A549 (cell line): ENCODE measurements at regions of chr1 and their contacts with region 1.

Region 1: GRCh38 chr1:20493839-20494608 is 8.0 kb upstream of the CAMK2N1 start:
- DNase-seq: peak; percentile 76 to 85
- ATAC-seq: peak; percentile 73 to 90
- H3K4me3 ChIP-seq: no peak overlapping the region
- H3K27ac ChIP-seq: peak overlapping the region; percentile 67 to 73
- H3K4me1 ChIP-seq: peaks cover 16% of the 10 kb centered on the region
- CTCF ChIP-seq: peak; percentile 86
- EP300 ChIP-seq: no peak
- POLR2A ChIP-seq: no peak
- RAD21 ChIP-seq: peak; percentile 97 to 99

Region 2: DNA sequence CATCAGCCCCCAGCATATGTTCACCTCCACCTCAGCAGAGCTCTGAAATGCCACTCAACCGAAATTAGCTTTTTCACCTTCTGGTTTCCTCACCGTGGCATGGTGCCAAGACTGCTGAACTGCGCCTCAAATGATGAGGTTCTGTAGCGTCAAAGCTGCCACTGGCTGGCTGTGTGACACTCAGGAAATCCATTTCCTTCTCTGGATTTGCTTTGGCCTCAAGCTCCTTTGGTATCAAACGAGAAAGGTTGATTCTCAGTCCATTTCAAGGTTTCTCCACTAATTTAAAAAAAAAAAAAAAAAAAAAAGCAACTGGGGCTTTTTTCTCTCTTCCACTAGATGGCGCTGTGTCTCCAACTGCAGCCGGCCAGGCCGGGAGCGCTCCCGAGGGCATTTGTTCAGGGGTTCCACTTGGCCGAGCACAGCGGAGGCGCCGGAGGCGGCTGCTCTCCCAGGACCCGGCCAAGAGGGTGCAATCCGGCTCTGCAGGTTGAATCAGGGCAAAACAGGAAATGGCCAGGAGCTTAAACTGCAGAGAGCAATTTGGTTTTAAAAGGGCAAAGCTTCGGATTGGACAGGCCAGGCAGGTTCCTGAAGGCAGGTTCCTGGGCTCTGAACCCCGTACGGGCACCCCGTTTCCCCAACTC is 281.2 kb before region 1 on chr1:
- CTCF ChIA-PET with region 1: interaction called, 162 read pairs
- POLR2A ChIA-PET with region 1: no interaction called
- DNase-seq: peak; percentile 48 to 50
- ATAC-seq: peak; percentile 76 to 87
- H3K4me3 ChIP-seq: no peak overlapping the region
- H3K27ac ChIP-seq: peak overlapping the region; percentile 87 to 91
- H3K4me1 ChIP-seq: peaks cover 34% of the 10 kb centered on the region
- CTCF ChIP-seq: peak; percentile 86
- EP300 ChIP-seq: no peak
- POLR2A ChIP-seq: no peak
- RAD21 ChIP-seq: peak; percentile 69 to 82

Region 3: DNA sequence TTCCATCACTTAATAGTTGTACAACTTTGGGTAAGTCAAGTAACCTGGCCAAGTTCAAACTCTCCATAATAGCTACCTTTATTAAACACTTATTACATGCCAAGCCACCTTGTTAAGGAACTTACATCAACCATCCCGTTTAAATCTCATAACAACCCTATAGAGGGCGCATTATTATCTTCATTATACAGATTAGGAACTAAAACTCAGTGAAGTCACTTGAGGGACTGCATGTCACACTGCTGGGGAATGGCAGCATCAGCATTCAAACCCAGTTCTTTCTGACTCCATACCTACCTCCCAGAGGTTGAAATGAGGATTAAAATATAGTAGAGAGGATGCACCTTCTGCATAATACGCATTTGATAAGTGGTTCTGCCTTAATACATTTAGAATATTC is 260.6 kb before region 1 on chr1:
- CTCF ChIA-PET with region 1: interaction called, 15 read pairs
- POLR2A ChIA-PET with region 1: no interaction called
- DNase-seq: peak in 1 of 2 experiments; percentile 31
- ATAC-seq: peak; percentile 54 to 78; a peak in 4 of 6 replicates
- H3K4me3 ChIP-seq: no peak overlapping the region
- H3K27ac ChIP-seq: no peak overlapping the region
- H3K4me1 ChIP-seq: no peaks in the 10 kb centered on the region
- CTCF ChIP-seq: peak; percentile 49
- EP300 ChIP-seq: no peak
- POLR2A ChIP-seq: no peak
- RAD21 ChIP-seq: peak; percentile 23 to 29; a peak in 4 of 5 replicates

Region 4: DNA sequence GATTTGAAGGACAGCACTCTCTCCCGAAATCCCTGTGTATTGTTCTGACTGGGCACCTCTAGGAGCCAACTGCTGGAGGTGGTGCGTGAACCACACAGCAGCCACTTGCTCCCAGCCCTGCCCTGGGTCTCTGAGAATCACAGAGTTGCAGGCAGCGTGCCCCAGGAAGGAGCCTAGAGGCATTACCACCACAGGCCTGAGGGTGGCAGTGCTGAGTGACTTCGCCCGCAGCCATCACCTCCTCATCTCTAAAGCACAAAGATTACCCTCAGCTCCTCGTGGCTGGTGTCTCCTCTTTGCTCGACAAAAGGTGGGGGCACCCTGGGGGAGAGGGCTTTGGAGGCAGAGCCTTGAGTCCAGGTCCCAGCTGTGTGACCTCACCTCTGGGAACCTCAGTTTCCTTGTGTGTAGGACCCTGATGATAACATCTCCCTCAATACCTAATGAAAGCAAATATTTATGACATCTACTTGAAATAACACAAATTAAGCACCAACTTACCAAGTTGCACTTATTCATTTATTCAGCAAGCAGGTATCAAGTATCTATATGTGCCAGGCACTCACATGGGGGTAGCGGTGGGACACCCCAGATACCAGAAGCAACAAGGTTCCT is 117.0 kb before region 1 on chr1:
- CTCF ChIA-PET with region 1: interaction called, 26 read pairs
- POLR2A ChIA-PET with region 1: no interaction called
- DNase-seq: peak; percentile 34 to 59
- ATAC-seq: peak; percentile 65 to 92; a peak in 5 of 6 replicates
- H3K4me3 ChIP-seq: no peak overlapping the region
- H3K27ac ChIP-seq: peak overlapping the region in 1 of 2 experiments; percentile 43; a peak in 2 of 6 replicates
- H3K4me1 ChIP-seq: peaks cover 33% of the 10 kb centered on the region
- CTCF ChIP-seq: peak; percentile 48
- EP300 ChIP-seq: no peak
- POLR2A ChIP-seq: no peak
- RAD21 ChIP-seq: peak; percentile 42 to 61; a peak in 4 of 5 replicates

Region 5: DNA sequence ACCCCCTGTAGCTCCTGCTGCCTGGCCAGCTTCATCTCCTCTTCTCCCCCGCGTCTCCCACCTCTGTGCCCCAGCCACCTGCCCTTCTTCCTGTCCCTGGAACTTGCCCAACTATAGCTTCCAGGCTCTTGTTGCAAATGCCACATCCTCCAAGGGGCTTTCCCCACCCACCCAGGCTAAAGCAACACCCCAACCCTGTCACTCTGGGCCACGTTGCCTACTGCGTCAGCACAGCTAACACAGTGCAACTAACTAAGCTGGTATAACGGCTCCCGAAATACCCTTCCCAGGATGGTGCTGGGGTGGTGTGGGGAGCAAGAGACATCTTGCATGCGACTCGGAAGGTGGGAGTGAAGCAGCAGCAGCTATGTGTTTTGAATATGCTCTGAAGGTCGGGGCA is 27.8 kb before region 1 on chr1:
- CTCF ChIA-PET with region 1: interaction called, 14 read pairs
- POLR2A ChIA-PET with region 1: no interaction called
- DNase-seq: no peak
- ATAC-seq: no peak; a peak in 1 of 6 replicates
- H3K4me3 ChIP-seq: no peak overlapping the region
- H3K27ac ChIP-seq: no peak overlapping the region
- H3K4me1 ChIP-seq: peaks cover 6% of the 10 kb centered on the region
- CTCF ChIP-seq: no peak
- EP300 ChIP-seq: no peak
- POLR2A ChIP-seq: no peak
- RAD21 ChIP-seq: no peak

Region 6: DNA sequence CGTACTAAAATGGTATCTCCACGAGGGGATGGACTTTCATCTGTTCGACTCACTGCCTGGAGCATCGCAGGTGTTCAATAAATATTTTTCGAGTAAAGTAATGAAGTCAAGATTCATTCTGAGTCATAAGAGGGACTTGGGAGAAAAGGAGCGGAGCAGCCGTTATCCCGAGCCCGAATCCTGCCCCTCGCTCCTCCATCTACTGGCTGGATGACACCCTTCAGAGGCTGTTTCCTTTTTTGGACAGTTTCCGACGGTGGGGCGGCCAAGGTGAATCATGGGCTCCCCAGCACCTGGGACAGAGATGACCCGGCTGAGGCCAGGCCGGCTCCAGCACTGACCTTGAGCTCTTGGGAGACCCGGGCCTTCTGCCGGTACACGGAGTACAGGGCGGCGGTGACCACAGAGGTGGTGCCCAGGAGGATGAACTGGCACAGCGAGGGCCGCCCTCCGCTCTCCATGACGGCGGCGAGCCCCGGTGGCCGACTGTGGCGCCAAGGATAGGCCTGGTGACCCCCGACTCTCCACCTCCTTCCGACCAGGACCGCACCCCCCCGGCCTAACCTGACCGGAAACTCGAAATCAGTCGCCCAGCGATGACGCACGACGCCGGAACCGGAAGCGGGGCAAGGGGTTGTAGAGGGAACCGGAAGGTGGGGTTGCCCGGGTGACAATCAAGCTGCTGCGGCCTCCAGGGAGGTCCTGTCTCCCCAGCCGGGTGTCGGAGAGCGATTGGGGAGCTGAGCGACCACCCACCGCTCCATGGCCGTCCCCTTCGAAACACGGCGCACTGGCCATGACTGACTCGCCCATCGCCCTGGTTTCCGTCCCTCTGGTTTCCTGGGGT is 13.8 kb after region 1 on chr1 and contains the start of gene MUL1:
- CTCF ChIA-PET with region 1: interaction called, 17 read pairs
- POLR2A ChIA-PET with region 1: no interaction called
- DNase-seq: peak; percentile 88 to 91
- ATAC-seq: peak; percentile 97 to 99
- H3K4me3 ChIP-seq: peak within 1 kb of the TSS; percentile 87
- H3K27ac ChIP-seq: peak within 1 kb of the TSS; percentile 84 to 89
- H3K4me1 ChIP-seq: peaks cover 9% of the 10 kb centered on the region; the same call in 2 of the 3 replicates
- CTCF ChIP-seq: no peak
- EP300 ChIP-seq: no peak
- POLR2A ChIP-seq: peak; percentile 43
- RAD21 ChIP-seq: no peak
- polyA plus RNA-seq, gene MUL1: 20.0 and 22.9 TPM in 2 replicates

Region 7: DNA sequence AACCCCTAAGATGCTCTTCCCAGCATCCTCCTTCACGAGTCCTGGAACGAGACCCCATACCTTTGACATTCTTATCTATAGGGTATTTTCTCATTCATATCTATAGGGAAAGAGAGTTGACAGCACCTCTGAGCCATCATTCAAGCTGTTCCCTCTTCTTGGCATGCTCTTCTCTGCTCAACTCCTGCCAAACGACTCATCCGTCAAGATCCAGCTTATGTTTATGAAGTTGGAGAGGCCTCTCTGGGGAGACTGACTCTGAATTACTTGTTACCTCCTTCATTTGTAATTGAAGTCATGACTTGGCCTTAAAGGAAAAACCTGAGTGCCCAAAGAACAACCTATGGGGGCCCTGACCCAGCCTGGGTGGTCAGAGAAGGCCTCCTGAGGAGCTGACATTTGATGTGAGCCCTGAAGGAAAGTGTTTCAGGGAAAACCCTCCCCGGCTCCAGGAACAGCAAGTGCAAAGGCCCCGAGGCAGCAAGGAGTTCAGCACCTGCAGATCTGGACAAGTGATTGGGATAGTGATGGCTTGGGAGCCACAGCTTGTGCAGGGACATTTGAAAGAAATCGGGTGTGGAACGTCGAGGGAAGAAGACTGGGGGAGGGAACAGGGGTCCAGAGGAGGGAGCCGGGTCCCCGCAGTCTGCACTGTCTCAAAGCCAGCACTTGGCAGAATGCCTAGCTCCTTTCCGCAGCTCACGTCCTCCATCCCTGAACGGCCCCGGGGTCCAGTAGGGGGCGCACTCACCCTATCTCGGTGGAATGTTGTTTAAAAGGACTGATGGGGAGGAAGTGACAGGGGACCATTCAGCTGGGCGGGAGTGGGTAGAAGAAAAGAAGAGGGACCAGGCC is 80.9 kb after region 1 on chr1:
- CTCF ChIA-PET with region 1: no interaction called
- POLR2A ChIA-PET with region 1: no interaction called
- DNase-seq: peak; percentile 80 to 82
- ATAC-seq: peak; percentile 94 to 97
- H3K4me3 ChIP-seq: no peak overlapping the region
- H3K27ac ChIP-seq: peak overlapping the region; percentile 13 to 80; a peak in 4 of 6 replicates
- H3K4me1 ChIP-seq: peaks cover 14% of the 10 kb centered on the region
- CTCF ChIP-seq: peak; percentile 70
- EP300 ChIP-seq: no peak
- POLR2A ChIP-seq: no peak
- RAD21 ChIP-seq: peak; percentile 82 to 90